ENCODE measurements at regions of chr18 and their contacts with region 1.

Region 1: DNA sequence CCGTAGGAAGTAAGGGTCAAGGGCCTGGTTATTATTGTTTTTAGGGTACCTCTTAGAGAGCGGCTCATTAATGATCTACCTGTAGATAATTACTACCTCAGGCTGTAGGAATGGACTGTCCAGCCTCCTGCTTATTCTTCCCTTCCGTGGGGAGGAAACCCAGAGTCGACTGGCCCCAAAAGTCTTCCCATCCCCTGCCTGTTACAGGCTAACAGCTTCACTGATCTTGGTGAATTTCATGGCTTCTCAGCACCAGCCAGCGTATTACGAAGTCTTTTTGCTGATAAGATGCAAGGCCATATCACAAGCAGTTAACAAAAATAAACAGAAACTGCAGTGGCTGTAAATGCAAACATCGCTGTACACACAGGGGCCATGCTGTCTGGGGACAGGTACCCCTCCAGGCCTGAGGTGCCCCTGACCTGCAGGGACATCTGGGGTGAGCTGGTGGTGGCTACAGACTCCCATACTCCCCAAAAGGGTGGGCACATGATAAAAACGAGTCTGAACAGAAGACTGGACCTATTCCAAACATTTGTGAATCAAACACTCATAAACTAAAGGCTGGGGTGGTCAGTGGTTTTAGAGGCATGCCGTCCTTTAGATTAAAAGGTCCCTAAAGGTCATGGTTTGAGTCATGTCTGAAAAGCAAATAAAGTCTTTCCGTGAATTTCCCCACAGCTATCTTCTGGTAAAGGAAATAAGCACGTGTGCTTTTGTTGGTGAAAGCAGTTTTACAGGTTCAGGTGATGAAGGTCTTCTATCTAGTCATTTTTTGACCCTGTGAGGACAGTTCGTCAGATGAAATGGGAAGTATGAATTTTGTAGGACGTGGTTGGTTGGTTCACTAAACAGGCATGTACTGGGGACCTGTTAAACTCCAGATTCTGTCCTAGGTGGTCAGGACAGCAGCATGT is 36.7 kb downstream of the TTC39C start:
- DNase-seq: peak; percentile 56
- H3K4me3 Mint-ChIP-seq: peak overlapping the region; percentile 64
- H3K27ac Mint-ChIP-seq: peak overlapping the region; percentile 86
- H3K4me1 Mint-ChIP-seq: peaks cover 58% of the 10 kb centered on the region
- H3K27me3 Mint-ChIP-seq: no peaks in the 10 kb centered on the region

Region 2: GRCh38 chr18:23871410-23871809 is 179.9 kb before region 1 on chr18:
- intact Hi-C with region 1: no loop called
- DNase-seq: peak; percentile 82
- H3K4me3 Mint-ChIP-seq: peak overlapping the region; percentile 11
- H3K27ac Mint-ChIP-seq: peak overlapping the region; percentile 79
- H3K4me1 Mint-ChIP-seq: peaks cover 26% of the 10 kb centered on the region
- H3K27me3 Mint-ChIP-seq: peaks cover 24% of the 10 kb centered on the region

Region 3: GRCh38 chr18:24019641-24020331 is 31.5 kb before region 1 on chr18:
- intact Hi-C with region 1: loop called (anchors 1 kb)
- DNase-seq: peak; percentile 91
- H3K4me3 Mint-ChIP-seq: peak overlapping the region; percentile 87
- H3K27ac Mint-ChIP-seq: peak overlapping the region; percentile 94
- H3K4me1 Mint-ChIP-seq: peaks cover 78% of the 10 kb centered on the region
- H3K27me3 Mint-ChIP-seq: no peaks in the 10 kb centered on the region

Region 4: GRCh38 chr18:24063121-24063731 is 11.9 kb after region 1 on chr18:
- intact Hi-C with region 1: loop called (anchors 1 kb)
- DNase-seq: no peak
- H3K4me3 Mint-ChIP-seq: no peak overlapping the region
- H3K27ac Mint-ChIP-seq: no peak overlapping the region
- H3K4me1 Mint-ChIP-seq: peaks cover 31% of the 10 kb centered on the region
- H3K27me3 Mint-ChIP-seq: no peaks in the 10 kb centered on the region

Measured in activated CD4-positive, alpha-beta T cell treated with anti-CD3 and anti-CD28 coated beads, Interleukin-2, amount 10 ng/mL, durations not matched to agents 24 days and 14 days (primary cell).